T-cell (primary cell): ENCODE measurements at regions of chr13 and their contacts with region 1.

Region 1: DNA sequence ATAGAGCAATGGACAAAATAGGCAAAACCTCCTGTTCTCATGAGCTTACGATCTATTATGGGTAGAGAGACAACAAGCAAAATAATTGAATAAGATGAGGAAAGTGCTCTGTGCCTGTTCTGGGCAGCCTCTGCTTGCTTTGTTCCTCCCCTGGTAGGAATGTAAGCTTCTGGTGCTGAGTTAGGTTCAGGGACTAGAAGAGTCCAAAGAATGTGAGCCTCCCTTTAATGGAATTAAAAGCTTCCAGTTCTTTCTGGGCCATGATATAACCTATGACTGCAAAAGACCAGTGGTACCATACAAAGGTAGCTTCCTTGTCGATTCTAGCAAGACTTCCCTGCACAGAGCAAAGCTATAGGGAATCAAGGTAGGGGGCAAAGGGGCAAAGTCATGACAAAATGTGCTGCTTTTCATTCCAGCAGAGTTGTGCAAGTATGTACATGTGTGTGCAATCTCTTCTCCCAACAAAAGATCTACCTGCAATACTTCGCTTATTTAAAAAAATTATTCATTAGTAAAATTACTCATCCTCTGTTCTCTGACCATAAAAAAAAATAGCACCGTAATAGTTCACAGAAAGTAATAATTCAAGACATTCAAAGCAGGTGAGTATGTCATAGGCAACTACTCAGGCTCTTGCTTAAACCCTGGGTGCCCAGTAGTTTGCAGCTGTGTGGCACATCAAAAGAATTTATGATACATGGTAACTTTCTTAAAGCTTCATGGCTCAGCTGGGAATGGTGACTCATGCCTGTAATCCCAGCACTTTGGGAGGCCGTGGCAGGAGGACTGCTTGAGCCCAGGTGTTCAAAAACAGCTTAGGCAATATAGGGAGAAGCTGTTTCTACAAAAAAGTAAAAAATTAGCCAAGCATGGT is 21.4 kb downstream of the ACOD1 start:
- DNase-seq: no peak
- ATAC-seq: no peak
- H3K4me3 ChIP-seq: no peak overlapping the region
- H3K4me3 Mint-ChIP-seq: no peak overlapping the region
- H3K27ac ChIP-seq: no peak overlapping the region
- H3K27ac Mint-ChIP-seq: no peak overlapping the region
- H3K4me1 ChIP-seq: no peaks in the 10 kb centered on the region
- H3K4me1 Mint-ChIP-seq: peaks cover 0 to 4% (median 2%) of the 10 kb centered on the region in 3 donors
- H3K27me3 ChIP-seq: peaks cover 0 to 39% of the 10 kb centered on the region in 2 experiments
- H3K27me3 Mint-ChIP-seq: peaks cover 12 to 44% of the 10 kb centered on the region in 2 donors

Region 2: GRCh38 chr13:76473552-76474134 is 496.1 kb before region 1 on chr13:
- CTCF ChIA-PET with region 1: interaction called in 1 of 2 experiments, 13 read pairs
- POLR2A ChIA-PET with region 1: no interaction called
- DNase-seq: peak; percentile 16 to 83 (median 54)
- ATAC-seq: peak; percentile 57 to 92 (median 76)
- H3K4me3 ChIP-seq: no peak overlapping the region
- H3K4me3 Mint-ChIP-seq: no peak overlapping the region
- H3K27ac ChIP-seq: no peak overlapping the region
- H3K27ac Mint-ChIP-seq: no peak overlapping the region
- H3K4me1 ChIP-seq: no peaks in the 10 kb centered on the region
- H3K4me1 Mint-ChIP-seq: no peaks in the 10 kb centered on the region
- H3K27me3 ChIP-seq: no peaks in the 10 kb centered on the region
- H3K27me3 Mint-ChIP-seq: peaks cover 4 to 10% of the 10 kb centered on the region in 2 donors

Region 3: DNA sequence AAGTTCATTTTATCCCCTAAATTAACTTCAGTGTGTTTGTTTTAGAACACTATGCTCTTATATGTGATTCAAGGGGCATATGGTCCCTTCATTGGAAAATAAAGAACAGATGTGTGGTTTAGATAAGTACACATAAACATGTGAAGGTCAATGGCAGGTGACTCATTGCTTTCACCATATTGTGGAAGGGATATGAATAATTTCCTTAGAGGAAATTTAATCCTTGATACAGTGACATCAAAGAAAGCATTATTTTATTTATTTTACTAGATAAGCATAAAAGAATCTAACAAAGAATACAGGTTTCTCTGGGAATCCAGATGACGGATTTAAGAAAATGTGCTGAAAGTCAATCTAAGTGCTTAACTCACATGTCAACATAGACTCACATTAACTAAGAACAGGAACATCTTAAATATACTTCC is 457.0 kb before region 1 on chr13:
- CTCF ChIA-PET with region 1: no interaction called
- POLR2A ChIA-PET with region 1: no interaction called
- DNase-seq: no peak
- ATAC-seq: no peak
- H3K4me3 ChIP-seq: no peak overlapping the region
- H3K4me3 Mint-ChIP-seq: no peak overlapping the region
- H3K27ac ChIP-seq: no peak overlapping the region
- H3K27ac Mint-ChIP-seq: no peak overlapping the region
- H3K4me1 ChIP-seq: no peaks in the 10 kb centered on the region
- H3K4me1 Mint-ChIP-seq: no peaks in the 10 kb centered on the region
- H3K27me3 ChIP-seq: no peaks in the 10 kb centered on the region
- H3K27me3 Mint-ChIP-seq: peaks cover 12 to 18% of the 10 kb centered on the region in 2 donors

Region 4: GRCh38 chr13:76523740-76524340 is 445.9 kb before region 1 on chr13:
- CTCF ChIA-PET with region 1: no interaction called
- POLR2A ChIA-PET with region 1: no interaction called
- DNase-seq: no peak
- ATAC-seq: no peak
- H3K4me3 ChIP-seq: no peak overlapping the region
- H3K4me3 Mint-ChIP-seq: no peak overlapping the region
- H3K27ac ChIP-seq: no peak overlapping the region
- H3K27ac Mint-ChIP-seq: no peak overlapping the region
- H3K4me1 ChIP-seq: no peaks in the 10 kb centered on the region
- H3K4me1 Mint-ChIP-seq: no peaks in the 10 kb centered on the region
- H3K27me3 ChIP-seq: no peaks in the 10 kb centered on the region
- H3K27me3 Mint-ChIP-seq: peaks cover 0 to 11% of the 10 kb centered on the region in 2 donors

Region 5: GRCh38 chr13:76696370-76696769 is 273.4 kb before region 1 on chr13:
- CTCF ChIA-PET with region 1: no interaction called
- POLR2A ChIA-PET with region 1: interaction called in 1 of 2 experiments, 12 read pairs
- DNase-seq: no peak
- ATAC-seq: no peak
- H3K4me3 ChIP-seq: no peak overlapping the region
- H3K4me3 Mint-ChIP-seq: no peak overlapping the region
- H3K27ac ChIP-seq: no peak overlapping the region
- H3K27ac Mint-ChIP-seq: no peak overlapping the region
- H3K4me1 ChIP-seq: no peaks in the 10 kb centered on the region
- H3K4me1 Mint-ChIP-seq: no peaks in the 10 kb centered on the region
- H3K27me3 ChIP-seq: peaks cover 0 to 3% of the 10 kb centered on the region in 2 experiments
- H3K27me3 Mint-ChIP-seq: peaks cover 13 to 24% of the 10 kb centered on the region in 2 donors